BJ (cell line): ENCODE measurements at regions of chr1 and their contacts with region 1.

Region 1: DNA sequence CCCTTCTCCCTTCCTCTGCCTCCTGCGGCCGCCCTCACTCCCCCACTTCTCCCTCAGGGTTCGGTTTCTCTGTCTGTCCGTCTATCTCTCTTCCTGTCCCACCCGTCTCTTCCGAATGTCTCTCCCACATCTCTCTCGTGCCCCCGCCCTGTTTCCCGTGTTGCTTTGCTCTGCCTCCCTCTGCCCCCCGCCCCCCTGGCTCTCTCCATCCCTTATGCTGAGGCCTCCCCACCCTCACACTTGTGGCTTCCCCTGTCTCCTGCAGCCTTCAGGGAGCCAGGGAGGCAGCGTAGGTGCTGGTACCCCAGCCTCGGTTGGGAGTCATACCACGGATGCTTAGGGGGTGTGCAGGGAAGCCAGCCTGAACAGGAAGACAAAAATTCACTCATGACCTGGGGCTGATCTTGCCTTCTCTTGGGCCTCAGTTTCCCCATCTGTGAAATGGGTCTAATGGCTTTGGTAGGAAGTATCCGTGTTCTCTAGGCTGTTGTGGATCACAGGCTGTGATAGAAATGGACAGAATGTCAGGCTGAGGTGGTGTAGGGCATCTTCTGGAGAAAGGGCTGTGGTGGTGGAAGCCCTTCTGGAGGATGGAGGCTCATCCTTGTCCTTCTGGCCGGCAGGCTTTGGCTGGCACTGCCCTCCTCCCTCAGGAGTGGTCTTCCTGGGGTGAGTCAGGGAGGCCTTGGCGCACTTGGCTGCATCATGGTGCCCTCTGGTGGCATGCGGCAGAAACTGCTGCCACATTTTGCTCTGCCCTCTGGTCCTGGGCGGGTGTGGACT is 55.5 kb downstream of the FOXO6 start:
- DNase-seq: no peak
- H3K4me3 ChIP-seq: no peak overlapping the region
- H3K27me3 ChIP-seq: no peaks in the 10 kb centered on the region; the same call in 1 of the 2 replicates
- CTCF ChIP-seq: peak; percentile 92

Region 2: GRCh38 chr1:41268154-41268770 is 148.5 kb before region 1 on chr1:
- CTCF ChIA-PET with region 1: interaction called, 12 read pairs
- POLR2A ChIA-PET with region 1: no interaction called
- DNase-seq: peak; percentile 9
- H3K4me3 ChIP-seq: no peak overlapping the region
- H3K27me3 ChIP-seq: peaks cover 4% of the 10 kb centered on the region
- CTCF ChIP-seq: peak; percentile 98

Region 3: GRCh38 chr1:41277371-41277975 is 139.3 kb before region 1 on chr1:
- CTCF ChIA-PET with region 1: interaction called, 84 read pairs
- POLR2A ChIA-PET with region 1: no interaction called
- DNase-seq: no peak
- H3K4me3 ChIP-seq: no peak overlapping the region
- H3K27me3 ChIP-seq: peaks cover 13% of the 10 kb centered on the region
- CTCF ChIP-seq: no peak

Region 4: DNA sequence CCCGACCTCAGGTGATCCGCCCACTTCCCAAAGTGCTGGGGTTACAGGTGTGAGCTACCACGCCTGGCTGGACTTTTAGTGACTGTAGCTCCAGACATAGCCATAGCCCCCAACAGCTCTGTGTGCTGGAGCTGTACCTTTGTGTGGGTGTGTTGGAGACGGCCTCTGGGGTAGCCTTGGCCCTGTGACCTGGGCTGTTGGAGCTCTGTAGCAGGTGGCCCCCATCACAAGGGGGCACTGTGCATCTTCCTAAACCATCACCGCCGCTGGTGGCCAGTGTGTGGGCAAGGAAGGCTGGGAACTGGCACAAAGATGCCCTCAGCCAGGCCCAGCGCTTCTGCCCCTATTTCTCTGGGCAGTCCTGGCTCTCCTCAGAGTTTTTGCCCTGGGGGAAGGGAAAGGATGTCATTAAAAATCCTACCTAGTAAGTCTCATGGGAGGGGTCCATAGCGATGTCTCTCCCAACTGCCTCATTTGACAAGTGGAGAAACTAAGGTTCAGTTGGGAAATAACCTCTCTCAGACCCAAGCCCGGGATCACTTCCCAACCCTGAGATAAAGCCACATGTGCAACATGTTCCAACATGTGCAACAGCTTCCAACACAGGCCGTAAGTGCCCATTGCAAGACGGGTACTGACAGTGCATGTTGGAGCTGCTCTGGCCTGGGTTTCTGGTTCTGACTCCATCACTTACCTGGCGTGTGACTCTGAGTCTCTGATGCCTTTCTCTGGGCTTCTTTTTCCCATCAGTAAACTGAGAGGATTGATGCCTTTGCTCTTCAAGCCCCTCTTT is 93.7 kb before region 1 on chr1:
- CTCF ChIA-PET with region 1: interaction called, 28 read pairs
- POLR2A ChIA-PET with region 1: no interaction called
- DNase-seq: no peak
- H3K4me3 ChIP-seq: no peak overlapping the region
- H3K27me3 ChIP-seq: no peaks in the 10 kb centered on the region; the same call in none of the 2 replicates
- CTCF ChIP-seq: peak; percentile 48

Region 5: GRCh38 chr1:41394959-41395956 is 21.5 kb before region 1 on chr1:
- CTCF ChIA-PET with region 1: interaction called, 10 read pairs
- POLR2A ChIA-PET with region 1: no interaction called
- DNase-seq: no peak
- H3K4me3 ChIP-seq: no peak overlapping the region
- H3K27me3 ChIP-seq: peaks cover 25% of the 10 kb centered on the region
- CTCF ChIP-seq: no peak

Region 6: GRCh38 chr1:41432481-41433280 is 15.9 kb after region 1 on chr1:
- CTCF ChIA-PET with region 1: interaction called, 56 read pairs
- POLR2A ChIA-PET with region 1: no interaction called
- DNase-seq: no peak
- H3K4me3 ChIP-seq: no peak overlapping the region
- H3K27me3 ChIP-seq: peaks cover 4% of the 10 kb centered on the region
- CTCF ChIP-seq: peak; percentile 92

Region 7: GRCh38 chr1:41578712-41579332 is 162.1 kb after region 1 on chr1:
- CTCF ChIA-PET with region 1: no interaction called
- POLR2A ChIA-PET with region 1: no interaction called
- DNase-seq: no peak
- H3K4me3 ChIP-seq: no peak overlapping the region
- H3K27me3 ChIP-seq: no peaks in the 10 kb centered on the region
- CTCF ChIP-seq: peak; percentile 54

Region 8: DNA sequence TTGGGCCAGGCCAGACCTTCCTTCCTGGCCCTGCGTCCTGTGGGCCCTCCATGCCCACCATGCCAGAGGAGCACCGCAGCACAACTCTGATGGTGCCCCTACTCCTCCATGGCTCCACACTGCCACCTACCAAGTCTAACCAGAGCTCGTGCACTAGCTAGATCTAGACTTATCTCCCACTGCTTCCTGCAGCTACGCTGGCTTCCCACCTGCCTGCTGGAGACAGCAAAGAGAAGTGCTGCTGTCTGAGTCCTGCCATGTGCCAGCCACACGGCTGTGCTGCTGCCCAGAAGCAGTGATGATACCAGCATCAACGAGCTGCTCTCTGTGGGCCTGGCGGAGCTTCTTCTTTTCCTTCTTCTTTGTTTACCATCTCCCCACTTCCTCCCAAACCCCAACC is 740.9 kb after region 1 on chr1:
- CTCF ChIA-PET with region 1: no interaction called
- POLR2A ChIA-PET with region 1: no interaction called
- DNase-seq: no peak
- H3K4me3 ChIP-seq: no peak overlapping the region
- H3K27me3 ChIP-seq: peaks cover 4% of the 10 kb centered on the region
- CTCF ChIP-seq: no peak